Activated naive CD4-positive, alpha-beta T cell treated with anti-CD3 and anti-CD28 coated beads, Interleukin-2, amount 10 ng/mL, durations not matched to agents 7 days and 5 days (primary cell): ENCODE measurements at regions of chr19 and their contacts with region 1.

Region 1: DNA sequence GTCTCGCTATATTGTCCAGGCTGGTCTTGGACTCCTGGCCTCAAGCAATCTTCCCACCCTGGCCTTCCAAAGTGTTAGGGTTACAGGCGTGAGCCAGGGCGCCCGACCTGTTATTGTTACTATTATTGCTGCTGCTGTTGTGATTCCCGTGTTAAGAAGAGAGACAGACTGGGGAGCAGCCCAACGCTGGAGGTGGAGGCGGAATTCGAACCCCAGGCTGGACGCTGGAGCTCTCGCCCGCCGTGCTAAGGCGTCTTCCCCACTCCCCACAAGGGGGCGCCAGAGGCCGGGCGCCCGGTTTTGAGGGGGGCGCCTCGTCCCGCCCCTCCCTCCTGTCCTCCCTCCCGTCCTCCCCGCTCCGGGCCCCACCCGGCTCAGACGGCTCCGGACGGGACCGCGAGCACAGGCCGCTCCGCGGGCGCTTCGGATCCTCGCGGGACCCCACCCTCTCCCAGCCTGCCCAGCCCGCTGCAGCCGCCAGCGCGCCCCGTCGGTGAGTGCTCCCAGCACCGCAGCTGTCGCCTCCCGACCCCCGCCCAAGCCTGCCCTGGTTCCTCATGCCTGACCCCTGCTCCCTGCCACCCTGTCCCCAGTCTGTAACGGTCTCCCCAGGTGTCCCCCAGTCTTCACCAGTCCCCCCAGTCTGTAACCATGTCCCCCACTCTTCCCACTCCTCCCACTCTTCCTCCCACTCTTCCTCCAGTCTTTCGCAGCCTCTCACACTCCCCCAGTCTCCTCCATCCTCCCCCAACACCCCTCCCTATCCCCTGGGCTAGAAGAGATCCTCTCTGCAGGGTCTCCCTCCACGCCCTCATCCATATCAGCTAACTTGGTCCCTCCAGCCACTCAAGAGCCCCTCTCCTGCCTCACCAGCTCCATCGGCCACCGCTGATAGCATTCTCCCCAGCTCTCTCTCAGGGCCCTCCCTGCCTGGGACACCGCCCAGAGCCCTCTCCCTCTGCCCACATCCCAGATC is at the start of gene EHD2:
- DNase-seq: peak; percentile 56
- H3K4me3 Mint-ChIP-seq: no peak within 1 kb of the TSS
- H3K27ac Mint-ChIP-seq: no peak within 1 kb of the TSS
- H3K4me1 Mint-ChIP-seq: peaks cover 7% of the 10 kb centered on the region
- H3K27me3 Mint-ChIP-seq: peaks cover 70% of the 10 kb centered on the region

Region 2: DNA sequence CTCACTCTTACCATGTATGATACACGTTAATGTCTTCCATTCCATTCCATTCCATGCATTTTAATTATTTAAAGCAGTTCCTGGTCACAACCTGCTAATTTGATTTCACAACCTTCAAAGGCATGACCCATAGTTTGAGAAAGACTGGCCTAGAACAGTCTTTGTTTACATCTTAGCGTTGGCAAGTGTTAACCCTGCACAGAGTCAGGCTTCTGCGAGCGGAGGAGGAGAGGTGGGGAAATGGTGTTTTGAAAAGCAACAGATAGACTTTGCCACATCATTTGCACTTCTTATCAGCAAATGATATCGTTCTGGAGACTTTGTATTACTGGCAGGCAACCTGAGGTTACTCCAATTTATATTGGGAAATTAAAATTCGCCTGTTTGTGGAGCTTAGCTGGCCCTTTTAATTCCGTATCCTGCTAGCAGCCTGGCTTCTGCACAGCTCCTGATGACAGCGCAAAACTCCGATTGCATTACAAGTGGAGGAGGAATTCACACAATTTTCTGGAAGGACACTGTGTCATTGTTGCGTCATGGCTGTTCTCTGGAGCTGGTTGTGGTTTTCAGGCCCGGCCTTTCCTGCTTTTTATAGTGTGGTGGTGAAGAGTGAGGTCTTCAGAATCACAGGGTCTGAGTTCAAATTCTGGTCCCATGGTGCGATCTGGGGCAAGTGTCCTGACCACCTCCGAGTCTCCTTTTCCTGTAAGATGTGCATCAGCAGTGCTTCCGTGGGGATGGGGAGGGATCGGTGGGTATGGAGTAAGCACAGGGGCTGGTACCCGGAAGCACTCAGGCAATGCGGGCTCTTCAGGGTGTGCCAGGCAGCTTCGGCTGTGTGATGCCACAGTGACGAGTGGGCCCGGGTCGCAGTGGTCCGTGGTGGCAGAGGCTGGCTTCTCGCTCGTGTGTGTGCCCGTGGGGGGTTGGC is 49.2 kb before region 1 on chr19:
- CTCF ChIA-PET with region 1: no interaction called
- DNase-seq: no peak
- H3K4me3 Mint-ChIP-seq: no peak overlapping the region
- H3K27ac Mint-ChIP-seq: no peak overlapping the region
- H3K4me1 Mint-ChIP-seq: peaks cover 3% of the 10 kb centered on the region
- H3K27me3 Mint-ChIP-seq: no peaks in the 10 kb centered on the region

Region 3: GRCh38 chr19:47735131-47735530 is 21.8 kb after region 1 on chr19:
- CTCF ChIA-PET with region 1: interaction called, 36 read pairs
- DNase-seq: no peak
- H3K4me3 Mint-ChIP-seq: no peak overlapping the region
- H3K27ac Mint-ChIP-seq: no peak overlapping the region
- H3K4me1 Mint-ChIP-seq: peaks cover 5% of the 10 kb centered on the region
- H3K27me3 Mint-ChIP-seq: peaks cover 28% of the 10 kb centered on the region

Region 4: DNA sequence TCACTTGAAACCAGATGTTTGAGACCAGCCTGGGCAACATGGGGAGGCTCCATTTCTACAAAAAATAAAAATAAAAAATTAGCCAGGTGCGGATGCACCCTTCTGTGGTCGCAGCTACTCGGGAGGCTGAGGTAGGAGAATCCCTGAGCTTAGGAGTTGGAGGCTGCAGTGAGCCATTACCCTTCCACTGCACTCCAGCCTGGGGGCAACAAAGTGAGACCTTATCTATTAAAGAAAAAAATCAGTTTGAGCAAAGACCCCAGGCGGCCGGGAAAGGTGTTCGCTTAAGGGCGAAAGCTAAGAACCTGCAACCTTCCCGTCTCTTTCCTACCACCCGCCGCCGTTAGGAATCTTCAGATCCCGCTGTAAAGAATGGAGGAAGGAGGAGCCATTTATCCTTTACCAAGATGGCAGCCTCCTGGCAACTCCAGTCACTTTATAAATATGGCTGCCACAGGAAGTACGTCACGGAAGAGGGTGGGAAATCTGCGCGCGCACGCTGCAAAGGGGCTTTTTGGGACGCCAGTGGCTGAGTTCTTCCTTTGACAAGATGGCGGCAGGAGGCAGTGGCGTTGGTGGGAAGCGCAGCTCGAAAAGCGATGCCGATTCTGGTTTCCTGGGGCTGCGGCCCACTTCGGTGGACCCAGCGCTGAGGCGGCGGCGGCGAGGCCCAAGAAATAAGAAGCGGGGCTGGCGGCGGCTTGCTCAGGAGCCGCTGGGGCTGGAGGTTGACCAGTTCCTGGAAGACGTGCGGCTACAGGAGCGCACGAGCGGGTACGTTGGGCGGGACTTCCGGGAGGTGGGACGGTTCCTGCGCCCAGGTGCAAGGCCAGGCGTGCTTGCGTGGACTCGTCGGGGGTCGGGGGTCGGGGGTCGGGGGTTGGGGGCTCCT is 31.9 kb after region 1 on chr19 and contains the start of gene NOP53:
- CTCF ChIA-PET with region 1: interaction called, 86 read pairs
- DNase-seq: peak; percentile 96
- H3K4me3 Mint-ChIP-seq: peak within 1 kb of the TSS; percentile 93
- H3K27ac Mint-ChIP-seq: peak within 1 kb of the TSS; percentile 98
- H3K4me1 Mint-ChIP-seq: peaks cover 59% of the 10 kb centered on the region
- H3K27me3 Mint-ChIP-seq: peaks cover 22% of the 10 kb centered on the region

Region 5: GRCh38 chr19:47790398-47790814 is 77.1 kb after region 1 on chr19:
- CTCF ChIA-PET with region 1: interaction called, 11 read pairs
- DNase-seq: peak; percentile 89
- H3K4me3 Mint-ChIP-seq: no peak overlapping the region
- H3K27ac Mint-ChIP-seq: no peak overlapping the region
- H3K4me1 Mint-ChIP-seq: peaks cover 2% of the 10 kb centered on the region
- H3K27me3 Mint-ChIP-seq: no peaks in the 10 kb centered on the region

Region 6: GRCh38 chr19:47848823-47849473 is 135.6 kb after region 1 on chr19:
- CTCF ChIA-PET with region 1: no interaction called
- DNase-seq: peak; percentile 55
- H3K4me3 Mint-ChIP-seq: no peak overlapping the region
- H3K27ac Mint-ChIP-seq: no peak overlapping the region
- H3K4me1 Mint-ChIP-seq: peaks cover 17% of the 10 kb centered on the region
- H3K27me3 Mint-ChIP-seq: peaks cover 63% of the 10 kb centered on the region